ENCODE measurements at regions of chr1 and their contacts with region 1.

Region 1: GRCh38 chr1:88549536-88549935 is 134.5 kb upstream of the PKN2 start:
- DNase-seq: no peak

Region 2: DNA sequence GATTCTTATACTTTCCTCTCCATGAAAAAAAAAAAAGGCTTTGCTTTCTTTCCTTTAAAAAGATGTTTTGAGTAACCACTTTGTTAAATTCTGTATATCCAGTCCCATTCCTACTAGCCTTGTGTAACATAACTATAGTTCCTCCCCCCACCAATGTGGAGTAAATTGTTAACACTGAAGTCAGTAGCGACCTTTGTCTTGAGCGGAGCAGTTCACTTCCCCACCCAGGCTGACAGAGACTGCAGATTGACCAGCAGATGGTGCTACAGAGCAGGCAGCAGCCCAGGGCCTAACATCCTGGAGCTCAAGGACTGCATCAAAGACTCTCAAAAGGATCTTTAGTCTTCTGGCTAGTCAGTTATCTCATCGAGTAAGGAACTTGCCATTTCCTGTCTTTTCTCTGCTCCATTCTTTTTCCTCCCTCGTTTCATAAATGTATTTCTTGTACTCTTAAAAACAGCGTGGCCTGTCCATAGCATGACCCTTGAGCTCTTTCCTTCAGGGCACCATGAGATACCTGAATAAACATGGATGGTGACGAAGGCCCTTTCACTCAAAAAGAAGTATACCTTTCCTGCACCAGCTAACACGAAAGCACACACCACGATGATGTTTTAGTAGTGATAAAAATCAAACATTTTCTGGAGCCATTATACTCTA is 369.0 kb before region 1 on chr1:
- intact Hi-C with region 1: loop called (anchors 10 kb)
- DNase-seq: peak; percentile 55 to 96 (median 80)

Region 3: DNA sequence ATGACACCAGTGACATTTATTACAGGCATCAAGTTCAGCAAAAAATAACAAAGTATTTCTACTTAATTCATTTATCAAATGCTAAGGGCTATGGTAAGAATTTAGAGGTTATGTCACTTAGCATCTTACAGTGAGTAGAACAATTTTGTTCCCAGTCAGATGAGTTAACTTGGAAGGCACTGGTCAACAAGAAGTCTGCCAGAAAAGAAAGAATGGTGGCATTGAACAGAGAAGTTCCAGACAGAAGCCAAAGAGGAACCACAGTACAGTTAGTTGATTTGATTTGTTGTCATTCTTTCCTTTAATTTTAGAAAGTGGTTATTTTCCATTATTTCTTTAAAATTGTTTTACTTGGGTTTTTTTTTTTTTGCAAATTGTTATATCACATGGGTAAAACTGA is 97.7 kb before region 1 on chr1:
- intact Hi-C with region 1: no loop called
- DNase-seq: no peak

Region 4: GRCh38 chr1:88462488-88463261 is 86.9 kb before region 1 on chr1:
- intact Hi-C with region 1: loop called (anchors 5 kb)
- DNase-seq: peak; percentile 55 to 96 (median 69)

Region 5: DNA sequence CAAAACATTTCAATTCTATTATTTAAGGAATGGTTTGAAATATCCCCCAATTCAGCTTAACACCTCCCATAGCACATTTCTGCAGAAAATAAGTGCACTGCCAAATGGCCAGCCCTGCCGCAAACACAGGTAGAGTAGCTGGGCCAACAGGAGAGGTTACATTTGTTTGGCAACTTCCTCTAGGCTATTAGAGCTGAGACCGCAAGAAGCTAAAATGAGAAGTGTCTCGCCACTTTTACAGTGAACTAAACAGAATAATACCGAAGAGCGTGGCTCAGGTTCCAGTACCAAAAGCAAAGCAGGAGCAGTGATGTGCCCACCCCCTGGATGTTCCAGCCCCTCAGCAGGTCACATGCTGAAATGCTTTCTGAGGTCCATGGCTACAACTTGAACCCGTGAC is 20.0 kb before region 1 on chr1:
- intact Hi-C with region 1: no loop called
- DNase-seq: no peak

Measured in posterior cingulate gyrus (tissue), 11 donors.